ENCODE measurements at regions of chr20 and their contacts with region 1.

Region 1: DNA sequence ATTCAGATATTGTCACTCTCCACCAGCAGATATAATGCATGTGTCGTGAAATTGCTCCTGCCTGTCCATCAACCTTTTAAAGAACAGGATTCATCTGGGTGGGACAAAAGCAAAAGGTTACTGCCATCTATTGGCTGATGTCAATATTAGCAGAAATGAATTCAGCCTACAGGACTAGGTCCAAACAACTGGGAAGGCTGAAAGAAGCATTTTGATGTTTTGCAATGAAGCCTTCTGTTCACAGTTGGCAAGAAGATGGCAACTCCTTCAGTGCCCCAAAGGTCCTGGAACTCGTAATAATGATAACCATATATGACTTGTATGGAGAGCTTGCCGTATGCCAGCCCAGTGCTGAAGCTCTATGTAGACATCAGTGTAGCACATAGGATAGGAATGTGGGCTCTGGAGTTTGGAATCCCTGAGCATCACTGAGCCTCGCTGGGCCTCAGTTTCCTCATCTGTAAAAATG is 7.5 kb downstream of the BCAS1 start:
- DNase-seq: no peak
- ATAC-seq: peak; percentile 44 to 79

Region 2: DNA sequence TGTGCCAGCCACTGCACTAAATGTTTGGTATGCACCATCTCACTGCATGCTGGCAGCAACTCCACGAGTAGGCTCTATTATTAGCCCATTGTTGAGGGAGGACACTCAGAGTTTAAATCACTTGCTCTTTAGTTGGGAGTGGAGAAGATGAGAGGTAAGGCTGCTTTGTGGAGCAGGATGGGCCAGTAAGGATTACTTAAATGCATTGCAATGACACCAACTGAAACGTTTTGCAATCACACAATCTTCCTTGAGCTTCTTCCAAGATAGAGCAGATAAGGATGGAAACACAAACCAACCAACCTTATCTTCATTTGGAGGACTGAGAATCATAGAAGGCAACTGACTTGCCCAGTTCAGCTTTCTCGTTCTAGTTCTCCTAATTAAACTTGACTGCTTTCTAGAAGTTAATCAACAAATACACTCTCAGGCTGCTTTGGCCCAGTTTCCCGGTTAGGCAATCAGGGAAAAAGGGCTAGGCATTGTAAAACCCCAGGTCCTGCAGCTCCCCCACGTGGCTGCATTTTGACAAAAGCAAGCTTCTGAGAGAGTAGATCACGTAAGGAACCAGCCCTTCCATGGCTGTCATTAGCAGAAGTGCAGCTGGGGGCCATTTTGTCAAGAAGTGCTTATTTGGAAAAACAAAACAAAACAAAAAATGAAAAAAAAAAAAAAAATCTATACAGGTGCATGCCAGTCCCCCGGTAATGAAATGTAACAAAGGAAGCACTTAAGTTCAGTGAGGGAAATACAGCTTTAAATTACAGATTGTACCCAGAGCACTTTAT is 123.1 kb before region 1 on chr20:
- intact Hi-C with region 1: loop called in 1 of 2 experiments (anchors 10 kb)
- DNase-seq: peak; percentile 93
- ATAC-seq: peak; percentile 90 to 91

Region 3: DNA sequence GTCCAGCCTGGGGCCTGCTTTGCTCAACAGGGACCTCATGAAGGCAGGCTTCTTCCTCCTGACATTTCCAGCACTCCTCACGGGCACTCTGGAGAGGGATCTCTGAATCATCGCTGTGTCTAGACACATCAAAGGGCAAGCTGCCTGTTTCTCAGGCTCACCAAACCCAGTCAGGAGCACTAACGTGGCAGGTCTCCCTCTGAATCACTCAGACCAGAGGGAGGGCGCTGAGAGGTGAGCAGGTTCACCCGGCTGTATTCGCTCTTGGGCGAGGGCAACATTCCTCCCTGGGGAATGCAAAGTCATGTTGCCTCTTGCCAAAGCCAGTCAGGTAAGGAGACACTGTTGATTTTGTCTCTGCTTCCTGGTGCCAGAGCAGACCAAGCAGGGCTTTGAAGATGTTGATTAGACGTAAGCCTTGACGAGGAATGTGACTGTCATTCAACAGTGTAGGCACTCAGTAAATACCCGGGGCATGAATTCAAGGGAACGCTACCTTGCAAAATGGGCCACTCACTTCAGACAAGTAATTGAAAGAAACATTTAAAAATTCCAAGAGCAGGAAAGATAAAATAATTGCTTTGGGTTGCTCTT is 60.8 kb after region 1 on chr20:
- intact Hi-C with region 1: no loop called
- DNase-seq: no peak
- ATAC-seq: peak; percentile 65 to 97